H1 (cell line): ENCODE measurements at regions of chr15 and their contacts with region 1.

Region 1: GRCh38 chr15:73677146-73677607 is 7.0 kb upstream of the CD276 start:
- DNase-seq: peak in 1 of 2 experiments; percentile 85
- H3K4me3 ChIP-seq: no peak overlapping the region
- H3K27ac ChIP-seq: no peak overlapping the region
- H3K4me1 ChIP-seq: no peaks in the 10 kb centered on the region; a peak in 1 of 7 replicates
- H3K27me3 ChIP-seq: no peaks in the 10 kb centered on the region; a peak in 1 of 7 replicates
- CTCF ChIP-seq: peak; percentile 55 to 90 (median 88)
- EP300 ChIP-seq: no peak
- POLR2A ChIP-seq: no peak
- RAD21 ChIP-seq: peak; percentile 63 to 71

Region 2: DNA sequence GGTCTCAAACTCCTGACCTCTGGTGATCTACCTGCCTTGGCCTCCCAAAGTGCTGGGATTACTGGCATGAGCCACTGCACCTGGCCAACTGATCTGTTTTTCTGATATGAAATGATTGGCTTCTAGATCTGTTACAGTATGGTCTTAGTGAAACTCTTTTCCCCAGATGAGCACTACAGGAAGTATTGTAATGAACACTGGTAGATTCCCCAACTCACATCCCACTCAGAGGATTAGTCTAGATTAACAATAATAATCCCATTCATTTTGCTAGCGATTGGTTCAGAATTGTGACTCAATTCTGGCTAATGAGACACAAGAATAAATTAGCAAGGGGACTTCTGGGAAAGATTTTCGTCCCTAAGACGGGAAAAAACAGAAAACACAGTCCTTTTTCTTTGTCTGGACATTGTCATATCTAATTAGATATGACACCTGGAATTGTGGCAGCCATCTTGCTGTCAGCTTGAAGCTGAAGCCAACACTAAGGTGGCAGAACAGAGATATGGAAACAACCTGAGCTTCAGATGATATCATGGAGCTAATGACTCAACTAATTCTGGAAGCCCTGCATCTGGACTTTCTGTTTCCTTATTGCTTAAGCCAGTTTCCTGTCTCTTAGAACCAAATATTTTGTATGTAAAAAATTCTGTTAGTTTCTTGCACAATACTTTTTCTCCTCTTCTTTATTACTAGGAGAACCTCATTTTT is 26.6 kb before region 1 on chr15:
- CTCF ChIA-PET with region 1: interaction called, 12 read pairs
- POLR2A ChIA-PET with region 1: no interaction called
- DNase-seq: no peak
- H3K4me3 ChIP-seq: no peak overlapping the region
- H3K27ac ChIP-seq: no peak overlapping the region
- H3K4me1 ChIP-seq: no peaks in the 10 kb centered on the region
- H3K27me3 ChIP-seq: no peaks in the 10 kb centered on the region
- CTCF ChIP-seq: no peak
- EP300 ChIP-seq: no peak
- POLR2A ChIP-seq: no peak
- RAD21 ChIP-seq: no peak

Region 3: DNA sequence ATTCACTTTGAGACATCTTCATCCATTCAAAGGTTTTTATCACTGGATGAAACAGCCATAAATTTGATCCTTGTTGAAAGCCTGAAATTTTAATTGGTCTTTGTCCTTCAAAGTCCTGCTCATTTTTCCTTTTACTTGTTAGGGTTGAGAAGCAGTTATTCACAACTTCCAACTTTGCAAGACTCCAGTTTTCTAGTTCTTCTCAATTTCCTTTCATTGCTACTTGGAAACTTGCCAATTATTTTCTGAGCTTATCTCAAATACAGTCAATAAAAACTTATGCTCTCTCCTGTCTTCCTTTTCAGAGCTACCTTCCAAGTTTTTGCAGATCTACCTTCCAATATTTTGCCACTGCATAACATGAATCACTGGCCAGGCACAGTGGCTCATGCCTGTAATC is 16.7 kb before region 1 on chr15:
- CTCF ChIA-PET with region 1: interaction called, 31 read pairs
- POLR2A ChIA-PET with region 1: no interaction called
- DNase-seq: no peak
- H3K4me3 ChIP-seq: no peak overlapping the region
- H3K27ac ChIP-seq: no peak overlapping the region
- H3K4me1 ChIP-seq: no peaks in the 10 kb centered on the region
- H3K27me3 ChIP-seq: 0 out of 7 replicates have a peak, but pooled peaks cover 0 to 2% (median 0%) of the 10 kb centered on the region in 4 experiments
- CTCF ChIP-seq: no peak
- EP300 ChIP-seq: no peak
- POLR2A ChIP-seq: no peak
- RAD21 ChIP-seq: no peak